H1 (cell line): ENCODE measurements at regions of chr13 and their contacts with region 1.

Region 1: GRCh38 chr13:112942689-112943308 is 26.2 kb upstream of the MCF2L start:
- DNase-seq: peak; percentile 85 to 99
- H3K4me3 ChIP-seq: peak overlapping the region in 3 of 4 experiments; percentile 43 to 71 (median 56); a peak in 7 of 8 replicates
- H3K27ac ChIP-seq: no peak overlapping the region
- H3K4me1 ChIP-seq: no peaks in the 10 kb centered on the region; a peak in 2 of 7 replicates
- H3K27me3 ChIP-seq: no peaks in the 10 kb centered on the region
- CTCF ChIP-seq: peak; percentile 93 to 99 (median 99)
- EP300 ChIP-seq: no peak
- POLR2A ChIP-seq: no peak
- RAD21 ChIP-seq: peak; percentile 94 to 95

Region 2: DNA sequence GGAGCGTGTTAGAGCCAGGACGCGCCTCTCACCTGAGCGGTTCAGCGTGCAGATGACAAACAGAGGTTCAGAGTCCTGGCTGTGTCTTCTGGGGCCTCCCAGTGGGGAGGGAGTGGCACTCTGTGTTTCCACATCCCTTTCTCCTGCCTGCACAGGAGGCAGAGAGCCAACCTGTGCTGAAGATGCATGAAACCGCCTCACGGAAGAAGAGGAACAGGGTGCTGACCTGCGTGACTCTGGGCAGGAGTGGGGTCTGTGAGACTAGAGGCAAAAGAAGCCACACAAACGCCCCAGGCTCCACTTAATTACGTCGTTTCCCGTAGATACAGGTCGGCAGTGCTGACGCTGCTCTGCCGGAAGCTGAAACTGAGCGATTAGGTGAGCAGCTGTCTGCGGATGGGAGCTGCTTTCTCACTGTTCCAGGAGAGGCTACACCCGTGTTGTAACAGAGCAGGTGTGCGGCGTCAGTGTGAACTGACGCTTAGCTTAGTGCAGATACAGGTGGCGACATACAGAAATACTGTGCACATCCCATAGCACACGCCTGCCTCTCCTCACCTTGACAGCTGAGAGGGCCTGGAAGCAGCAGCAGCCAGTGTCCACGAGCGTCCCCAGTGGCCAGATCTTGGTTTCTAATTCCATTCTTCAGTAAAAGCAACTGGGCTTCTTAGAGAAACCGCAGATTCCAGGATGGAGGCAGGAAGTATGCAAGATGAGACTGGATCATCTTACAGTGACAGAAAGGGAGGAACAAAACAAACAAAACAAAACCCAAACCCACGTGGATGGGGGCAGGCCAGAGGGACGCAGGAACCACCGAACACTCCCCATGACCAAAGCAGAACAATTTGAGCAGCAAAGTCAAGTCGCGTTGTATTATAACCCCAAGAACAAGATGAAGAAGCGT is 11.5 kb before region 1 on chr13:
- CTCF ChIA-PET with region 1: interaction called, 24 read pairs
- POLR2A ChIA-PET with region 1: no interaction called
- DNase-seq: peak in 1 of 2 experiments; percentile 13
- H3K4me3 ChIP-seq: no peak overlapping the region
- H3K27ac ChIP-seq: no peak overlapping the region
- H3K4me1 ChIP-seq: peaks cover 0 to 17% (median 8%) of the 10 kb centered on the region in 4 experiments; a peak in 4 of 7 replicates
- H3K27me3 ChIP-seq: no peaks in the 10 kb centered on the region
- CTCF ChIP-seq: peak; percentile 69 to 83 (median 70)
- EP300 ChIP-seq: no peak
- POLR2A ChIP-seq: no peak
- RAD21 ChIP-seq: peak; percentile 51 to 66

Region 3: GRCh38 chr13:113001241-113002140 is 58.7 kb after region 1 on chr13:
- CTCF ChIA-PET with region 1: interaction called, 15 read pairs
- POLR2A ChIA-PET with region 1: no interaction called
- DNase-seq: no peak
- H3K4me3 ChIP-seq: no peak overlapping the region
- H3K27ac ChIP-seq: no peak overlapping the region
- H3K4me1 ChIP-seq: peaks cover 0 to 4% (median 1%) of the 10 kb centered on the region in 4 experiments; a peak in 1 of 7 replicates
- H3K27me3 ChIP-seq: no peaks in the 10 kb centered on the region
- CTCF ChIP-seq: no peak
- EP300 ChIP-seq: no peak
- POLR2A ChIP-seq: no peak
- RAD21 ChIP-seq: no peak